Posterior vena cava (tissue), 2 donors: ENCODE measurements at regions of chr13 and their contacts with region 1.

Region 1: DNA sequence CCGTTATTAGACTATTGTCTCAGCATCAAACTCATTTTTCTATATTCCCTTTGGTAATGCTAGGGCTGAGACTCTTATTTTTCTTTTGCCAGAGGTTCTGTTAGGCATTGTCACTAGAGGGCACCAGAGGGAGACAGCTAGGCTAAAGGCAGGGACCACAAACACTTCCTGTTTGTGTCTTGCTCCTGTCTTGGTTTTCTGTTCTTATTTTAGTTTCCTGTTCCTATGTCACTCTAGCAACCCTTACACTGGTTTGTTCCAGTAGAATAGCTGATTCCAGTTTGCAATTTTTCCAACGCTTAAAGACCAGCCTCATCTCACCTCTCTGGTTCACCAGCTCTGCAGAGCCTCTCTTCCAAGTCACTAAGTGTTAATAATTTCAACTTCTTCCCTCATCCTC is 772.0 kb downstream of the DIAPH3 start:
- DNase-seq: no peak

Region 2: GRCh38 chr13:59510386-59510785 is 118.7 kb after region 1 on chr13:
- intact Hi-C with region 1: no loop called
- DNase-seq: no peak

Region 3: GRCh38 chr13:59677966-59678814 is 286.5 kb after region 1 on chr13:
- intact Hi-C with region 1: loop called in 1 of 2 experiments (anchors 5 kb)
- DNase-seq: no peak